ENCODE measurements at regions of chr16 and their contacts with region 1.

Region 1: DNA sequence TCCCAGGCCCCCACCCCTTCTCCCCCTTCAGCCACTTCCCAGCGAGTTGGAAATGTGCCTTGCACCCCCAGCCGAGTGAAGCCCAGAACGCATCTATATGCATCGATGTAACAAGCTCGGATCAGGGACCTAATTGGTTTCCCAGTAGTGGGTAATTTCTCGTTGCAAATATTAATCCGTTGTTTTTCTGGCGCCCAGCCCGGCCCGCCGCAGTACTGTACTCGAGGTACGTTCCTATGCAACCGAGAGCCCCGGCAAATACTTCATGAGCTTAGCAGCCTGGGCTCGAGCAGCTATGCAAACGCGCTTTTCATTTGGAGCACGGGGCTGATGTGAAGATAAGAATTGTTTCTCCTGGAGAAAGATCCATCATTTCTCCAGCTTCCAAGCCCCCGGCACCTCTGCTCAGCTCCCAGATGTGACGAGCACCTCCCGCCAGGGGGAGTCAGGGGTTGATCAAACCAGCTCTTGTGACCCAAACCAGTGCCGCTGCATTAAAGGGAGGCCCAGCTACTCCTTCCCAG is 229.8 kb downstream of the KATNIP start:
- DNase-seq: peak; percentile 93
- H3K4me3 ChIP-seq: no peak overlapping the region
- H3K27ac ChIP-seq: peak overlapping the region in 1 of 2 experiments; percentile 34; a peak in 2 of 4 replicates
- H3K4me1 ChIP-seq: peaks cover 0 to 37% of the 10 kb centered on the region in 2 experiments; a peak in 1 of 4 replicates
- H3K27me3 ChIP-seq: no peaks in the 10 kb centered on the region
- CTCF ChIP-seq: peak; percentile 54
- EP300 ChIP-seq: no peak
- RAD21 ChIP-seq: peak; percentile 75

Region 2: GRCh38 chr16:27489906-27490305 is 289.8 kb before region 1 on chr16:
- CTCF ChIA-PET with region 1: no interaction called
- POLR2A ChIA-PET with region 1: no interaction called
- DNase-seq: no peak
- H3K4me3 ChIP-seq: no peak overlapping the region
- H3K27ac ChIP-seq: no peak overlapping the region
- H3K4me1 ChIP-seq: no peaks in the 10 kb centered on the region
- H3K27me3 ChIP-seq: no peaks in the 10 kb centered on the region
- CTCF ChIP-seq: no peak
- EP300 ChIP-seq: no peak
- RAD21 ChIP-seq: no peak

Region 3: DNA sequence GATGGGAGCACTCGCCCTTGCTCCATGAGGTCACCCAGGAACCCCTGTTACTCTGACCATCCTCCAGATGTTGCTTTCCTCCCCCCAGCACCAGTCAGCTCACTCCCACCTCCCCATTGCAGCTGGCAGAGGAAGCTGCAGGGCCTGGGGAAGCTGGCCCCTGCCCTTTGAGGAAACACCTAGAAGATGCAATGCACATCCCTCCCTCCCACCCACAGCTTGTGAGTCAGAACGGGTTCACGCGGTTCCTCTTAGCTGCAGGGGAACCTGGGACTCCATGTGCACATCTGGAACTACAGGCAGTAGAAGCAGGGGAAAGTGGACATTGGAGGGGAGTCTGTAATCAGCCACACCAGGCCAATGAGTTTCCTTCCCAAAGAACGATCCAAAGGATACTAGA is 132.9 kb before region 1 on chr16:
- CTCF ChIA-PET with region 1: interaction called, 14 read pairs
- POLR2A ChIA-PET with region 1: no interaction called
- DNase-seq: no peak
- H3K4me3 ChIP-seq: no peak overlapping the region
- H3K27ac ChIP-seq: no peak overlapping the region
- H3K4me1 ChIP-seq: peaks cover 0 to 4% of the 10 kb centered on the region in 2 experiments; a peak in 1 of 4 replicates
- H3K27me3 ChIP-seq: no peaks in the 10 kb centered on the region
- CTCF ChIP-seq: no peak
- EP300 ChIP-seq: no peak
- RAD21 ChIP-seq: no peak

Region 4: GRCh38 chr16:27859020-27859419 is 79.3 kb after region 1 on chr16:
- CTCF ChIA-PET with region 1: interaction called, 14 read pairs
- POLR2A ChIA-PET with region 1: no interaction called
- DNase-seq: no peak
- H3K4me3 ChIP-seq: no peak overlapping the region
- H3K27ac ChIP-seq: no peak overlapping the region
- H3K4me1 ChIP-seq: no peaks in the 10 kb centered on the region
- H3K27me3 ChIP-seq: no peaks in the 10 kb centered on the region
- CTCF ChIP-seq: no peak
- EP300 ChIP-seq: no peak
- RAD21 ChIP-seq: peak; percentile 8; the same call in 1 of the 2 replicates

Region 5: GRCh38 chr16:27972500-27972899 is 192.8 kb after region 1 on chr16:
- CTCF ChIA-PET with region 1: interaction called, 17 read pairs
- POLR2A ChIA-PET with region 1: interaction called, 3 read pairs
- DNase-seq: peak; percentile 59
- H3K4me3 ChIP-seq: no peak overlapping the region
- H3K27ac ChIP-seq: no peak overlapping the region
- H3K4me1 ChIP-seq: no peaks in the 10 kb centered on the region; a peak in 1 of 4 replicates
- H3K27me3 ChIP-seq: no peaks in the 10 kb centered on the region
- CTCF ChIP-seq: peak; percentile 49
- EP300 ChIP-seq: no peak
- RAD21 ChIP-seq: peak; percentile 83